MCF 10A (cell line): ENCODE measurements at regions of chr2 and their contacts with region 1.

Region 1: GRCh38 chr2:60550178-60550983 is 3.1 kb downstream of the BCL11A start:
- DNase-seq: peak; percentile 92
- H3K4me3 Mint-ChIP-seq: peak overlapping the region; percentile 88
- H3K27ac Mint-ChIP-seq: no peak overlapping the region
- H3K4me1 Mint-ChIP-seq: peaks cover 10% of the 10 kb centered on the region
- H3K27me3 Mint-ChIP-seq: no peaks in the 10 kb centered on the region
- CTCF ChIP-seq: peak; percentile 77

Region 2: GRCh38 chr2:58762176-58762781 is 1788.1 kb before region 1 on chr2:
- CTCF ChIA-PET with region 1: interaction called, 23 read pairs
- POLR2A ChIA-PET with region 1: no interaction called
- intact Hi-C with region 1: loop called (anchors 1 kb)
- DNase-seq: peak; percentile 81
- H3K4me3 Mint-ChIP-seq: no peak overlapping the region
- H3K27ac Mint-ChIP-seq: no peak overlapping the region
- H3K4me1 Mint-ChIP-seq: peaks cover 6% of the 10 kb centered on the region
- H3K27me3 Mint-ChIP-seq: no peaks in the 10 kb centered on the region
- CTCF ChIP-seq: peak; percentile 69

Region 3: DNA sequence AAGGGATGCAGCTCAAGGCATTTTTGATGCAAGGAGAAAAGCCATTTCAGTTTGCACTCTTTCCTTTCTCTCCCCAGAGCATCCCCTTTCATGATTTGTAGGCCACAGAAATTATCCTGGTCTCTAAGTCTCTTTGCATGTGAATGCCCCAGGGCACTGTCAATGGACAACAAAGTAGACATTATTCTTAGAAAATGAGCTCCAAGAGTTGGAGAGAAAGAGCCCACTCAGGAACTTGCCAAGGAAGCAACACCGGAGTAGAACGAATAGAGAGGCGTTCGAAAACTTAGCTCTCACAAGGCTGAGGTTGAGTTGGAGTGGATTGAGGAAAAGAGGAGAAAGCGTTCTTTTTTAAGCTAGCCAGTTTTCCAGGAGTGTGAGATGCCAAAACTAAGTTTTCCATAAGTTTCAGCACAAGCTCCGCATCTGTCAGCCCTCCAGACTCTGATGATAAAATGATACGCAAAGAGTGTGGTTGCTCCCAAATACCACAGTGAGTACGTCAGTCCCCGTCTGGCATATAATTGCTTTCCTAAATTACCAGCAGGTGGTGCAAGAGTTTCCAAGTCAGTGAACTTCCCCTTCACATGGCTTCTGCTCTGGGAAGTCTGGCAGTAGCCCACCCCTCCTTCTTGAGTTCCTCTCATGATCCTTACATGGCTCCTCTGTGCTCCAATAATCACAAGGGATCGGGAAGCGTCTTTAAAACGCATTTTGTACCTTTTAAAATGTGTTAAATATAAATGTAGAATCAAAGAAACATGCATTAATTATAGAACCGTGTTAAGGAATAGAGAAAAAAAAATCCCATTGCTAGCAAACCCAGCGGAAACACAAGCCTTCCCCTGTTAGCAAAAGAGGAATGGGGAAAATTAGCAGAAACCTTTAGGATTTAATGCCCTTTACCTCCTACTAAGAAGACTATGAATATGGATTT is 1248.6 kb before region 1 on chr2:
- CTCF ChIA-PET with region 1: interaction called, 8 read pairs
- POLR2A ChIA-PET with region 1: interaction called, 3 read pairs
- intact Hi-C with region 1: loop called (anchors 1 kb)
- DNase-seq: peak; percentile 80
- H3K4me3 Mint-ChIP-seq: no peak overlapping the region
- H3K27ac Mint-ChIP-seq: no peak overlapping the region
- H3K4me1 Mint-ChIP-seq: no peaks in the 10 kb centered on the region
- H3K27me3 Mint-ChIP-seq: no peaks in the 10 kb centered on the region
- CTCF ChIP-seq: peak; percentile 66

Region 4: DNA sequence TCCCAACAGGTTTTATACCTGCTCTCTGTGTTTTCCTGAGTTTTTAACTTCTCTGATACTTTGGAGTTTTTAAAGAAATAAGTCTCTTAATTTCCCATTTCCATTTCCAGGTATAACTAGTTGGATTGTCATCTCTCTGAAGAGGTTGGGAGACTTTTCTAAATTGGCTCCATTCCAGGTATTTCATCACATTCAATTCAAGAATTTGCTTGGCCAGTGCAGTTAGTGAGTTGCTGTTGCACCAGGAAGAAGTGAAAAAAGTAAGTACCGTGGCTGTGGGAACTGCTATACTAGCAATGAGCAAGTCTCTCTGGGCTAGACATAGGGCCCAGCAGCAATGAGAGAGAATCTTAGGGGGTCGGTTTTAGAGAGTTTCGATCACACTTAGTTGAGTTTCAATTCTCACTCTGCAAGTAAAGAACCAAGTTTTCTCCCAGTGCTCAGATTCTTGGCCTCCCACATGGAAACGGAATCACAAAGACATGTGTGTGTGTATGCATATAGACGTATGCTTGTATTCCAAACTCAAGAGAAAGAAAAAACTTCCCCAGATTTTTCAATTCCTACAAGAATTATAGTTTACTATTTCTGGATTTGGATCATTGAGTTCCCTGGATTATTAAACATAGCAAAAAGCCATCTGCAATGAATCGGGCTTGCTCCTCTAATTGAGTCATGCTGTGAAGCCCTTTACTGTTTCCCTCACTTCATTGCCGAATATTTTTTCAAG is 891.3 kb before region 1 on chr2:
- CTCF ChIA-PET with region 1: interaction called, 4 read pairs
- POLR2A ChIA-PET with region 1: interaction called, 5 read pairs
- intact Hi-C with region 1: loop called (anchors 5 kb)
- DNase-seq: peak; percentile 64
- H3K4me3 Mint-ChIP-seq: no peak overlapping the region
- H3K27ac Mint-ChIP-seq: no peak overlapping the region
- H3K4me1 Mint-ChIP-seq: peaks cover 43% of the 10 kb centered on the region
- H3K27me3 Mint-ChIP-seq: no peaks in the 10 kb centered on the region
- CTCF ChIP-seq: no peak

Region 5: DNA sequence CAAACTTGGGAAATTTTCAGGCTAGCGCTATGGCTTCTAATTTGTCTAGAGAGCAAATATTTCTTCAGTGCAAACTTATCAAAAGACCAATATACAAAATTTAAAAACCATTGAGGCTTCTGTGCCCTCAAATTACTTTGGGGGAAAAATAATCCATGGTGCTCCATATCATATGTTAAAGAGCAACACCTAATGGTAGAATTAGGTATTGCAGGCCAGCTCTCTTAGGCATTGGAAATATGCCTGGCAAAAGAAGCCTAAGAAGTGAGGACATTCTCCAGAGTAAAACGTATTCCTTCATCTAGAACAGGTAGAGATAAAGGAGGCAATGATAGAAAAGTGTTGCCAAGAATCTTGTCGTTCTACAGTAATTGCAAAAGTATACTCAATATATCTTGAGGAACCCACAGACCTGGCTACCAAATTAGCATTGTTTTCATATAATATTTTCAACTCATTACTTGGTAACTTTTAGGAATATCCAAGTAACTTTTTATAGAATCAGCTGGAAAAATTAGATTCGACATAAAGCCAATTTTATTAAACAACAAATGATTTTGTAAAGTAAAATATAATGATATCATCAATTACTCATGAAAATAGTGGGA is 398.1 kb before region 1 on chr2:
- CTCF ChIA-PET with region 1: interaction called, 5 read pairs
- POLR2A ChIA-PET with region 1: no interaction called
- intact Hi-C with region 1: loop called (anchors 10 kb)
- DNase-seq: peak; percentile 43
- H3K4me3 Mint-ChIP-seq: no peak overlapping the region
- H3K27ac Mint-ChIP-seq: no peak overlapping the region
- H3K4me1 Mint-ChIP-seq: no peaks in the 10 kb centered on the region
- H3K27me3 Mint-ChIP-seq: no peaks in the 10 kb centered on the region
- CTCF ChIP-seq: peak; percentile 79

Region 6: DNA sequence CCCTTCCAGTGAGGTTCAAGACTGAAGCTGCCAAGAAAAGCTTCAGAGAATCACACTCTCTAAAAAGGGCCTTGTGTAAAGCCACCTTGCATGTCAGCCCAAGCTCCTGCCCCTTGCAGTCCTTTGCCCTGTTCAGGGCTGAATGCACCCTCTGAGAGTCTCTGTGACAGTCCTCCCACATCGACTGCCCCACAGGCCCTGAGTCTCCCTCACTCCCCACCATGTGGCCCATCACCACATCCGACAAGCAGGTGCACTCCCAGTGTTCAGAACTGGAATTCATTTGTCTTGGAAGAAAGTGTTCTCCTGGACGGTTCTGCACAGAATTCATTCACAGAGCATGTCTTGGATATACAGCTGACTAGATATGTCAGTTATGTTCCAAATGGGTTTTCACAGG is 27.9 kb before region 1 on chr2:
- CTCF ChIA-PET with region 1: no interaction called
- POLR2A ChIA-PET with region 1: no interaction called
- intact Hi-C with region 1: no loop called
- DNase-seq: no peak
- H3K4me3 Mint-ChIP-seq: no peak overlapping the region
- H3K27ac Mint-ChIP-seq: no peak overlapping the region
- H3K4me1 Mint-ChIP-seq: peaks cover 5% of the 10 kb centered on the region
- H3K27me3 Mint-ChIP-seq: no peaks in the 10 kb centered on the region
- CTCF ChIP-seq: no peak

Region 7: DNA sequence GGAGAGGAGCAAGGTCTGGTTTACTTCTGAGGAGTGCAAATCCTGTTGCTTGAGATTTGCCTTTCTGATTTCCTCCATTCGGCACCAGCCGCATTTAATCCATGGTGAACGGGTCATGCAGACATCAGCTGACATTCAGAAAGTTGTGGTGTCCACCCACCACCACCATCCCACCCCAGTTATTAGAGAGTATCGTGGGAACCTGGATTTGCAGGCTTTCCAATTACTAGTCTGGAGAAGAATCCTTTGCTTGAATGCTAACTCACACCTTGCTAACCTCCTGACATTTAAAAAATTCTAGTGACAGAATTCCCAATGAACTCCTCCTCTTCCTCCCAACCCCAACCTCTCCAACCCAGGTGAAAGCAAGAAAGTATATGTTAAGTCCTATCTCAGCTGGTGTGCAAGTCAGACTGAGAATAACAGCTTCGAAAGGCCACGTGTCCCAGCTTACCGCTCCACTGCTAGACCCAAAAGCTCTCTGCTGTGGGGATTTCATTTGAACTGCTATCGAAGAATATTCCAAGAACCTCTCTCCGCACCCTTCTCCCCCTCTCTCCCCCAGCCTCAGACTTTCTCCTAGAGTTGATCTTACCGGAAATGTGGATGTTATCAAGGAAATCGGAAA is 14.6 kb before region 1 on chr2:
- CTCF ChIA-PET with region 1: interaction called, 10 read pairs
- POLR2A ChIA-PET with region 1: interaction called, 7 read pairs
- intact Hi-C with region 1: no loop called
- DNase-seq: no peak
- H3K4me3 Mint-ChIP-seq: no peak overlapping the region
- H3K27ac Mint-ChIP-seq: peak overlapping the region; percentile 72
- H3K4me1 Mint-ChIP-seq: peaks cover 16% of the 10 kb centered on the region
- H3K27me3 Mint-ChIP-seq: no peaks in the 10 kb centered on the region
- CTCF ChIP-seq: no peak